ENCODE measurements at regions of chr13 and their contacts with region 1.

Region 1: GRCh38 chr13:105410602-105411001 is 1124.9 kb downstream of the EFNB2 start:
- DNase-seq: peak; percentile 23
- ATAC-seq: peak; percentile 76
- H3K4me3 ChIP-seq: no peak overlapping the region
- H3K27ac ChIP-seq: no peak overlapping the region
- H3K4me1 ChIP-seq: no peaks in the 10 kb centered on the region
- H3K27me3 ChIP-seq: no peaks in the 10 kb centered on the region
- CTCF ChIP-seq: peak; percentile 23 to 95 (median 86); a peak in 5 of 6 replicates
- POLR2A ChIP-seq: no peak
- RAD21 ChIP-seq: peak; percentile 62

Region 2: GRCh38 chr13:105395041-105395440 is 15.6 kb before region 1 on chr13:
- CTCF ChIA-PET with region 1: interaction called, 10 read pairs
- POLR2A ChIA-PET with region 1: no interaction called
- RAD21 ChIA-PET with region 1: no interaction called
- intact Hi-C with region 1: no loop called
- DNase-seq: no peak
- ATAC-seq: no peak
- H3K4me3 ChIP-seq: no peak overlapping the region
- H3K27ac ChIP-seq: no peak overlapping the region
- H3K4me1 ChIP-seq: no peaks in the 10 kb centered on the region
- H3K27me3 ChIP-seq: no peaks in the 10 kb centered on the region
- CTCF ChIP-seq: no peak
- POLR2A ChIP-seq: no peak
- RAD21 ChIP-seq: no peak

Region 3: DNA sequence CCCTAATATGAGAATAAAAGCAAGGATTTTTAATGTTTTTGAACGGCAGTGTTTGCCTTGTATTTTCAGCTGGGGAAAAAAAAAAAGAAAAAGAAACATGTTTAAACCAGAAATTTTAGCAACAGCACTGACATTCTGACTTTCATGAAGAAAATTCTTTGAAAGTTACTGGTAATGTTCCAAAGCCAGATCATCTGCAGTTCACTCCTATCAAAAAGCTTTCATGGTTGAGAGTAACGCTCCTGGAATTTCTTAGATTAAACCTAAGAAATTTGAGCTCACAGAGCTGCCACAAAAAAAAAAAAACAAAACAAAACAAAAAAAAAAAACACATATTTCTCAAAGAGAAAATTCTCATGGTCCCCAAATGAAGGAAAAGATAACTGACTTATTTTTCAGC is 18.2 kb after region 1 on chr13:
- CTCF ChIA-PET with region 1: interaction called, 10 read pairs
- POLR2A ChIA-PET with region 1: no interaction called
- RAD21 ChIA-PET with region 1: no interaction called
- intact Hi-C with region 1: no loop called
- DNase-seq: no peak
- ATAC-seq: no peak
- H3K4me3 ChIP-seq: no peak overlapping the region
- H3K27ac ChIP-seq: no peak overlapping the region
- H3K4me1 ChIP-seq: no peaks in the 10 kb centered on the region
- H3K27me3 ChIP-seq: no peaks in the 10 kb centered on the region
- CTCF ChIP-seq: no peak
- POLR2A ChIP-seq: no peak
- RAD21 ChIP-seq: no peak

Region 4: GRCh38 chr13:106033659-106034058 is 623.1 kb after region 1 on chr13:
- CTCF ChIA-PET with region 1: interaction called, 3 read pairs
- POLR2A ChIA-PET with region 1: no interaction called
- RAD21 ChIA-PET with region 1: no interaction called
- intact Hi-C with region 1: loop called (anchors 10 kb)
- DNase-seq: no peak
- ATAC-seq: 0 out of 2 replicates have a peak, but pooled peaks have one; percentile 35
- H3K4me3 ChIP-seq: no peak overlapping the region
- H3K27ac ChIP-seq: no peak overlapping the region
- H3K4me1 ChIP-seq: peaks cover 8 to 37% of the 10 kb centered on the region in 2 experiments; a peak in 3 of 4 replicates
- H3K27me3 ChIP-seq: no peaks in the 10 kb centered on the region
- CTCF ChIP-seq: peak in 2 of 3 experiments; percentile 27 to 34; a peak in 4 of 6 replicates
- POLR2A ChIP-seq: no peak
- RAD21 ChIP-seq: no peak